ENCODE measurements at regions of chr6 and their contacts with region 1.

Region 1: GRCh38 chr6:73520688-73521350 is at the start of gene EEF1A1:
- DNase-seq: peak; percentile 100
- ATAC-seq: peak; percentile 91 to 93
- total RNA-seq, gene EEF1A1: 5,040 to 5,332 TPM

Region 2: GRCh38 chr6:73451223-73452107 is 69.4 kb before region 1 on chr6:
- intact Hi-C with region 1: no loop called
- DNase-seq: peak; percentile 40
- ATAC-seq: peak; percentile 66 to 71

Region 3: GRCh38 chr6:73566954-73567591 is 46.3 kb after region 1 on chr6:
- intact Hi-C with region 1: loop called (anchors 5 kb)
- DNase-seq: peak; percentile 65
- ATAC-seq: peak in 1 of 2 donors; percentile 52

Region 4: DNA sequence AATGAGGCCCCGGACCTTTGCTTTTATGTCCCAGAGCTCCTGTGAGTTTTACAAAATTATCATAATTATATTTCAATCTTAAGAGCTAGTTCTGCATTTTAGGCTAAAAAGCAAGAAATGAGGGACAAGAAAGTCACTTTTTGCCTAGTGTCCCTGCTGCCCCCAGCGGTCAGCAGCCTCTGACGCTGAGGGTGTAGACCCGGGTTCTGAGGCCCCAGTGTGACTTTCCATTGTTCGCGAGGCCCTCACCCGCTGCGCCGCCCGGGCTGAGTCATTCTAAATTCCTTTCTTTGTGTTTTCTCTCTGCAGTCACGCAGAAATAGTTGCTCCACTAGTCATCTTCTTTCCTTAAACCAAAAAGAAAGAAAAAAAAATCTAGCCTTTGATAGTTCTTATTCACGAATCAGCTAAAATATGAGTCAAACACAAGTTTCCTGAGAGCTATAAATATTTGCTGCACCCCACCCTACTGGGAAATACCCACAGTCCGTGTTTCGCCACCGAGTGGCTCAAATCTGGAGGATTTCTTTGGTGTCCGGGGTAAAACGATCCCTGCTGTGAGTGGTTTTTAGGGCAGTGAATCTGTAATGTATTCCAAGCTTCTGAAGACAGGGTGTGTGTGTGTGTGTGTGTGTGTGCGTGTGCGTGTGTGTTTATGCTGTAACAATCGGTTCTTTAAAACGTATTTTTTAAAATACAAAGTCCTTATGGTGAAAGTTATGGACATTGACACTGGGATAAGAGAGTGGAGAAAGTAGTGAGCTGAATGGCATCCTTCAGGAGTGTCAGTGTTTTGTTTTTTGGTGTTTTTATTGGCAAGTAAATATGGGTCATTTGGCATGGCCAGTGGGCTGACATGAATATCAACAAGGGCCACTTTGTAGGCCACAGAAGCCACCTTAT is 59.7 kb after region 1 on chr6:
- intact Hi-C with region 1: loop called in 1 of 2 experiments (anchors 2 kb)
- DNase-seq: peak; percentile 90
- ATAC-seq: peak; percentile 86 to 96

Region 5: DNA sequence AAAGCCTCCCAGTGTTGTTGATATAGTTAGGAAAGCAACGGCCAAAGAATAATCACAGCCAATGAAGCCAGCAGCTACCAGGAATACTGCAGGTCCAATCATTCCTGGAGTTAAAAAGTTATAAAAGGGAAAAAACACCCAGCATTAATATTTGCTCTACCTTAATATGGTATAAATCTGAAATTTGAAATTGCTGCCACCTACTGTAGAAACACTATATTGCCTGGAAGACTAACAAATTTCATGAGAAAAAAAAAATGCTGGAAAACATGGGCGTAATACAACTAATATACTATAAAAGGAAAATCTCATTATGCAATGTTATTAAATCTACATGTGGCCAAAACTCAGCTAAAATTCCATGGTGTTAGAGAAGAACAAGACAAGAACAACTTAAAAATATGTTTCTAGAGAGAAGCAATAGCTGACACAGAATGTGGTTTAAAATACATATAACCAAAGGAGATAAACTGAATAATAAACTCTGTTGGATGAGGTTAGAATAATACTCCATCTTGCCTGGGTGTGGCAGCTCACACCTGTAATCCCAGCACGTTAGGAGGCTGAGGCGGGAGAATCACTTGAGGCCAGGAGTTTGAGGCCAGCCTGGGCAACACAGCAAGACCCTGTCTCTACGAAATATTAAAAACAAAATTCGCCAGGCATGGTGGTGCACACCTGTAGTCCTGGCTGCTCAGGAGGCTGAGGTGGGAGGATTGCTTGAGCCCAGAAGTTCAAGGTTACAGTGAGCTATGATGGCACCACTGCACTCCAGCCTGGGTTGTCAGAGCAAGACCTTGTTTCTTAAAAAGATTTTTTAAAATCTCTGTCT is 89.8 kb after region 1 on chr6:
- intact Hi-C with region 1: loop called in 1 of 2 experiments (anchors 2 kb)
- DNase-seq: no peak
- ATAC-seq: peak; percentile 59 to 61

Region 6: DNA sequence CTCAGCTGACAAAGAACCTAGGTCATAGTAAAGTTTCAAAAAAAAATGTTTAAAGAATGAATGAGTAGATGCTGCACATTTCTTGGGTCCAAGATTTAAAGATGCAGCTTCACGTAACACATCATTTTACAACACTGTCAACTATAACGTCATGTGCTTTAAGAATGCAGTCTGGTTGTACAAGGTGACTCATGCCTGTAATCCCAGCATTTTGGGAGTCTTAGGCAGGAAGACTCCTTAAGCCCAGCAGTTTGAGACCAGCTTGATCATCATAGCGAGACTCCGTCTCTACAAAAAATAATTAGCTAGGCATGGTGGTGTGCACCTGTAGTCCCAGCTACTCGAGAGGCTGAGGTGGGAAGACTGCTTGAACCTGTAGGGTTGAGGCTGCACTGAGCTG is 111.0 kb after region 1 on chr6:
- intact Hi-C with region 1: no loop called
- DNase-seq: no peak
- ATAC-seq: no peak

Region 7: DNA sequence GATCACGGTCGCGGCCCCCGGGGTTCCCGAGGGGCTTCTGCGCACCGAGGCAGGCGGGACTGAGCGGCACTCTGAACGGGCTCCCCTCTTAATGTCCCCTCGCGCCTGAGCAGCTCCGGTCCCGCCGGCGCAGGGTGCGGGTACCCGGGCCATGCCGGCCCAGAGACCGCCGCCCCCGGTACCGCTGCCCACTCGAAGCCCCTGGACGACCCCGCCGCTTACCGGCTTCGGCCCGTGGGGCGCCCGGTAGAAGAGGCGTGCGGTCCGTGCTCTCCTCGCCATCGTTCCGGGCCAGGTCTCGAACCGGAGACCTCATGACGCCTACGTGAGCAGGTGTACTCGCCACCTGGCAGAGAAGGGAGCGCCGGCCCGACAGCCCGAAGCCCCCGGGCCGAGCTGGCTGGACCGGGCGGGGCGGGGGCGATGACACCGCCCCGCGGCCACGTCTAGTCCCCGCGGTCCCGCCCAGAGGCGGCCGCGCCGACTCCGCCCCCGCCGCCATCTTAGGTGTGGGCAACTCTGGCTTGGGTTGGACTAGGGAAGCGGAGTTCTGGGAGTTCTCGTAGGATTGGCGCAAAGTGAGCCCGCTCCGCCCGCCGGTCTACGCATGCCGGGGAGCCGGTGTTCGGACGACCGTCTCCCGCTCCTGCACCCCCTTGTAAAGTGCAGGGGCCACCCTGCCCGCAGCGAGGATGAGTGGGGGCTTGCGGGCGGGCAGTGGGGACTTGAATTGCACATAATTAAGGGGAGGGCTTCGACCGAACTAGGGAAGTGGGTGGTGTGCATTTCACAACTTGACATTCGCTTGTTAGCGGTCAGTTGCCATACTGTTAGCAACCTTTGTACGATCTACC is 133.0 kb after region 1 on chr6 and contains the start of gene SLC17A5:
- intact Hi-C with region 1: loop called in 1 of 2 experiments (anchors 5 kb)
- DNase-seq: peak; percentile 94
- ATAC-seq: peak; percentile 98 to 99
- total RNA-seq, gene SLC17A5: 9.1 to 12.7 TPM